ENCODE measurements at regions of chr2 and their contacts with region 1.

Region 1: GRCh38 chr2:159118115-159118858 is 149.8 kb downstream of the TANC1 start:
- DNase-seq: peak; percentile 51
- ATAC-seq: peak; percentile 99
- H3K4me3 ChIP-seq: no peak overlapping the region
- H3K27ac ChIP-seq: no peak overlapping the region
- H3K4me1 ChIP-seq: no peaks in the 10 kb centered on the region
- H3K27me3 ChIP-seq: no peaks in the 10 kb centered on the region; a peak in 1 of 4 replicates
- CTCF ChIP-seq: peak; percentile 89 to 91 (median 90)
- EP300 ChIP-seq: no peak
- POLR2A ChIP-seq: no peak
- RAD21 ChIP-seq: peak; percentile 88

Region 2: DNA sequence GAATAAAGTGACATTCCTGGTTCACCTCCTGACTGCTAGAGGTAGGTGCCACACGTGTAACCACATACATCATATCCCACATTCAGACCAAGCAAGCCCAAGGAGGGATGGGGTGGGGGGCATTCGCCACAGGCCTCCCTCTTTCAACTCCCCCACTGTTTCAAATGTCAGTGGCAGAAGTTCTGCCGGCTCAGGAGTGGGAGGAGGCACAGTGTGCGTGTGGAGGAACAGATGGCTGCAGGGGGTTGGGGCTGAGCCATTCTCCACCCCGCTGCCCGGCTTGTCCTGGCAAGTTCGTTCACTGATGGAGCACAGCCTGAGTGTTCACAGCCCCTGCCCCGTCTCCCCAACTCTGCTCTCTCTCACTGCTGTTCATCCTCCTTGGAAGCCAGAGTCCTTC is 225.3 kb before region 1 on chr2:
- CTCF ChIA-PET with region 1: interaction called, 18 read pairs
- POLR2A ChIA-PET with region 1: no interaction called
- RAD21 ChIA-PET with region 1: interaction called, 3 read pairs
- SMC1A ChIA-PET with region 1: interaction called, 3 read pairs
- in situ Hi-C with region 1: loop called (anchors 5 kb)
- intact Hi-C with region 1: no loop called
- DNase-seq: no peak
- ATAC-seq: no peak
- H3K4me3 ChIP-seq: no peak overlapping the region
- H3K27ac ChIP-seq: no peak overlapping the region
- H3K4me1 ChIP-seq: no peaks in the 10 kb centered on the region
- H3K27me3 ChIP-seq: no peaks in the 10 kb centered on the region
- CTCF ChIP-seq: no peak
- EP300 ChIP-seq: no peak
- POLR2A ChIP-seq: no peak
- RAD21 ChIP-seq: no peak

Region 3: GRCh38 chr2:158903711-158904443 is 214.4 kb before region 1 on chr2:
- CTCF ChIA-PET with region 1: interaction called, 102 read pairs
- POLR2A ChIA-PET with region 1: no interaction called
- RAD21 ChIA-PET with region 1: interaction called, 16 read pairs
- SMC1A ChIA-PET with region 1: interaction called, 16 read pairs
- in situ Hi-C with region 1: loop called (anchors 5 kb)
- intact Hi-C with region 1: loop called (anchors 1 kb)
- DNase-seq: no peak
- ATAC-seq: no peak
- H3K4me3 ChIP-seq: no peak overlapping the region
- H3K27ac ChIP-seq: no peak overlapping the region
- H3K4me1 ChIP-seq: no peaks in the 10 kb centered on the region
- H3K27me3 ChIP-seq: no peaks in the 10 kb centered on the region; a peak in 1 of 4 replicates
- CTCF ChIP-seq: no peak
- EP300 ChIP-seq: no peak
- POLR2A ChIP-seq: no peak
- RAD21 ChIP-seq: no peak

Region 4: DNA sequence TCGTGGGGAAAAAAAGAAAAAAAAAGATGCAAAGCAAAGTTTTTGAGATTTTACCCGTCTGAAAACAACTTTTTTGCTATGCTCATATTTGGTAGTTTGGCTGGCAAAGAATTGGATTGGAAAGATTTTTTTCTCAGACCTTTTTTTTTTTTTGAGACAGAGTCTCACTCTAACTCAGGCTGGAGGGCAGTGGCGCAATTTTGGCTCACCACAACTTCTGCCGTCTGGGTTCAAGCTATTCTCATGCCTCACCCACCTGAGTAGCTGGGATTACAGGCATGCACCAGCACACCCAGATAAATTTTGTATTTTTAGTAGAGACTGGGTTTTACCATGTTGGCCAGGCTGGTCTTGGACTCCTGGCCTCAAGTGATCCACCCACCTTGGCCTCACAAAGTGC is 206.2 kb before region 1 on chr2:
- CTCF ChIA-PET with region 1: interaction called, 12 read pairs
- POLR2A ChIA-PET with region 1: no interaction called
- RAD21 ChIA-PET with region 1: no interaction called
- SMC1A ChIA-PET with region 1: interaction called, 6 read pairs
- in situ Hi-C with region 1: no loop called
- intact Hi-C with region 1: no loop called
- DNase-seq: no peak
- ATAC-seq: no peak
- H3K4me3 ChIP-seq: no peak overlapping the region
- H3K27ac ChIP-seq: no peak overlapping the region
- H3K4me1 ChIP-seq: no peaks in the 10 kb centered on the region
- H3K27me3 ChIP-seq: no peaks in the 10 kb centered on the region; a peak in 1 of 4 replicates
- CTCF ChIP-seq: no peak
- EP300 ChIP-seq: no peak
- POLR2A ChIP-seq: no peak
- RAD21 ChIP-seq: no peak

Region 5: DNA sequence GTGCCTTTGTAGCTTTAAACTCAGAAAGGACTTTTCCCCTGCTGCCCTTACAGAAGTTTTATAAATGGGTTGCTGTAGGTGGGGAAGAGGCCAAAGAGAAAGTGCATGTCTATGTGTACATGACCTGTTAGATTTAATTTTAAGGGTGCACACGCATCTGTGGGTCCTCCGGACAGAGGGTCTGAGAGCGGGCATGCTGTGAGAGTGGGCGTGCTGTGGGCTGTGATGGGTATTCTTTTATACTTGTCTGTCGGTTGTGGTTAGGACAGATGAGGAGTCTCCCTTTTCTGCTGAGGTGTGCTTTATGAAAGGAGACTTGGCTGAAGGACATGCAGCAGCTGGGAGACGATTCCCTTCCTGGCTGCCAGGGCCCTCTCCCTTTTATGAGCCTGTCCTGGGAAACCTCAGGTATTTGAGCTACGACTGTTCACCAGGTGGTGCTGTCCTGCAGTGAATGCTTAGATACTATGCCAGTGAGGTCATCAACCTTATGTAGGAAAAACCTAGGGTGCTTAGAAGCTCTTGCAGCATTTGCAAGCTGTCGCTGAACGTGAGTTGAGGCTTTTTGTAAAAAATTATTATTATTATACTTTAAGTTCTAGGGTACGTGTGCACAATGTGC is 82.4 kb before region 1 on chr2:
- CTCF ChIA-PET with region 1: interaction called, 6 read pairs
- POLR2A ChIA-PET with region 1: no interaction called
- RAD21 ChIA-PET with region 1: interaction called, 4 read pairs
- SMC1A ChIA-PET with region 1: no interaction called
- in situ Hi-C with region 1: no loop called
- intact Hi-C with region 1: loop called (anchors 1 kb)
- DNase-seq: no peak
- ATAC-seq: peak; percentile 51
- H3K4me3 ChIP-seq: no peak overlapping the region
- H3K27ac ChIP-seq: no peak overlapping the region
- H3K4me1 ChIP-seq: no peaks in the 10 kb centered on the region
- H3K27me3 ChIP-seq: no peaks in the 10 kb centered on the region
- CTCF ChIP-seq: peak in 2 of 3 experiments; percentile 7 to 23; a peak in 2 of 6 replicates
- EP300 ChIP-seq: no peak
- POLR2A ChIP-seq: no peak
- RAD21 ChIP-seq: peak; percentile 50

Region 6: GRCh38 chr2:159133797-159134196 is 15.5 kb after region 1 on chr2:
- CTCF ChIA-PET with region 1: interaction called, 19 read pairs
- POLR2A ChIA-PET with region 1: no interaction called
- RAD21 ChIA-PET with region 1: interaction called, 4 read pairs
- SMC1A ChIA-PET with region 1: interaction called, 5 read pairs
- in situ Hi-C with region 1: no loop called
- intact Hi-C with region 1: no loop called
- DNase-seq: no peak
- ATAC-seq: peak; percentile 40; the same call in 2 of the 3 replicates
- H3K4me3 ChIP-seq: no peak overlapping the region
- H3K27ac ChIP-seq: no peak overlapping the region
- H3K4me1 ChIP-seq: no peaks in the 10 kb centered on the region
- H3K27me3 ChIP-seq: no peaks in the 10 kb centered on the region; a peak in 1 of 4 replicates
- CTCF ChIP-seq: peak in 2 of 3 experiments; percentile 4 to 41; a peak in 1 of 6 replicates
- EP300 ChIP-seq: no peak
- POLR2A ChIP-seq: no peak
- RAD21 ChIP-seq: peak; percentile 44; the same call in 1 of the 2 replicates

Region 7: DNA sequence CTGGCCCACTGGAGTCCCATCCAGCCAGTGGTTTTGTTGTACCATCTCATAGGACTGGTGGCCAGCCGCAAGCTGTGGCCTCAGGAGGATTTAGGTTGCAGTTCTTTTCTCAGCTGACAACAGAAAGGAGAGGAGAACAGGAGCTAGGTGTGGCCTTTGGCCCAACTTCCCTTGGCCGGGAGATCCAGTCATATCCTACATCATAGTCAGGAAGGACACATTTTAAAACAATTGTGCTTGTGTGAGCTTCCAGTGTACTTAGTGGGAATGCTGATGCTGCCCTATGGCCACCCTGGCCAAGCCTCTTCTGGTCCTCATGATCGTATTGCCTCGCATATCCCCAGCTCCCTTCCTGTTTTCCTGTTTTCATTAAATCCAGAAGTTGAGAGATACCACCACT is 70.2 kb after region 1 on chr2:
- CTCF ChIA-PET with region 1: no interaction called
- POLR2A ChIA-PET with region 1: no interaction called
- RAD21 ChIA-PET with region 1: no interaction called
- SMC1A ChIA-PET with region 1: no interaction called
- in situ Hi-C with region 1: no loop called
- intact Hi-C with region 1: no loop called
- DNase-seq: no peak
- ATAC-seq: no peak
- H3K4me3 ChIP-seq: no peak overlapping the region
- H3K27ac ChIP-seq: no peak overlapping the region
- H3K4me1 ChIP-seq: peaks cover 20% of the 10 kb centered on the region
- H3K27me3 ChIP-seq: no peaks in the 10 kb centered on the region
- CTCF ChIP-seq: no peak
- EP300 ChIP-seq: no peak
- POLR2A ChIP-seq: no peak
- RAD21 ChIP-seq: no peak

Region 8: DNA sequence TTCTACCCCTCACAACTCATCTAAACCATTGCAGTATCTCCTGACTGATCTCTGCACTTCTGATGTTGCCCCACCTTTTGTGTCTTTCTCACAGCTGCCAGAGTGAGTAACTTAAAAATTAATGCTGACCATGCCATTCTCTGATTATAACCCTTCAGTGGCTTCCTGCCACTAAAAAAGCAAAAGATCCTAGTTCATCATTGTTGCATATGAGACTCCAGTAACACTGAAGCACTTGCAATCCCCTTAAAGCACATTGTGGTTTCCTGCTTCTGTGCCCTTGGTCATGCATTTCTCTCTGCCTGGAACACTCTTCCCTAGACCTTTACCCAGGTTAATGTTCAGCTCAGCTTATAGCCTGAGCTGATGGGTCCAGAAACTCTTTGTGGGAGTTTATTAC is 263.3 kb after region 1 on chr2:
- CTCF ChIA-PET with region 1: no interaction called
- POLR2A ChIA-PET with region 1: no interaction called
- RAD21 ChIA-PET with region 1: no interaction called
- SMC1A ChIA-PET with region 1: no interaction called
- in situ Hi-C with region 1: no loop called
- intact Hi-C with region 1: no loop called
- DNase-seq: peak; percentile 8
- ATAC-seq: peak; percentile 51
- H3K4me3 ChIP-seq: no peak overlapping the region
- H3K27ac ChIP-seq: no peak overlapping the region
- H3K4me1 ChIP-seq: no peaks in the 10 kb centered on the region
- H3K27me3 ChIP-seq: no peaks in the 10 kb centered on the region
- CTCF ChIP-seq: no peak
- EP300 ChIP-seq: no peak
- POLR2A ChIP-seq: no peak
- RAD21 ChIP-seq: no peak